H1 (cell line): ENCODE measurements at regions of chr17 and their contacts with region 1.

Region 1: DNA sequence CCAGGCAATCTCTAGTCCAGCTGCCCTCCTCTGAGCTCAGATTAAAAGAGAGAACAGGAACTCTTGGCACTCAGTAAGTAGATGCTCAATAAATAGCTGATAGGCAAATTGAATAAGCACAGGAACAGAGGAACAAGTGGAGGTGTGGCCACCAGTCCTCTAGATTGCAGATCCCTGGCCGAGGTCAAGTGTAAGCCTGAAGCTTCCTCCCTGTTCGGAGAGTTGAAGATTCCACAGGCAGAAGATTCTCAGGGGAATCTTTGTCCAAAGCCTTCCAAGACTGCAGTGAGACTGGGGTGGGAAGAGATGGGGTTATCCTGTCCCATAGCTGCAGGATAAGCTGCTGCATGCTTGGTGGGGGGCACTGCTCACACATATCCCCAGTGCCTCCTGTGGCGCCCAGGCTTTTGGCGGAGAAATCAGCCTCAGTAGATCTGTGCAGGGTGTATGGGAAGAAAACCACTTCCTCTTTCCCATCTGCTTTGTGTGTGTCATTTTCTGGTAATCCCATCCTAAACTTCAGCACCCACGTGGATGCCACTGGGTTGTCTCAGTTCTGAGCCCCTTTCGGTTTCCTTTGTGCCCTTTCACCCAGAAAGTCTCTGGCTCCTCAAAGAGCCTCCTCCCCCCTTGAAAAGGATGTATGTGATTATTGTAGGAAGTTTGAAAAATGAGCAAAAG is 12.1 kb downstream of the CD300A start:
- DNase-seq: no peak
- H3K4me3 ChIP-seq: no peak overlapping the region
- H3K27ac ChIP-seq: no peak overlapping the region
- H3K4me1 ChIP-seq: no peaks in the 10 kb centered on the region
- H3K27me3 ChIP-seq: no peaks in the 10 kb centered on the region; a peak in 1 of 7 replicates
- CTCF ChIP-seq: no peak
- EP300 ChIP-seq: no peak
- POLR2A ChIP-seq: no peak
- RAD21 ChIP-seq: no peak

Region 2: DNA sequence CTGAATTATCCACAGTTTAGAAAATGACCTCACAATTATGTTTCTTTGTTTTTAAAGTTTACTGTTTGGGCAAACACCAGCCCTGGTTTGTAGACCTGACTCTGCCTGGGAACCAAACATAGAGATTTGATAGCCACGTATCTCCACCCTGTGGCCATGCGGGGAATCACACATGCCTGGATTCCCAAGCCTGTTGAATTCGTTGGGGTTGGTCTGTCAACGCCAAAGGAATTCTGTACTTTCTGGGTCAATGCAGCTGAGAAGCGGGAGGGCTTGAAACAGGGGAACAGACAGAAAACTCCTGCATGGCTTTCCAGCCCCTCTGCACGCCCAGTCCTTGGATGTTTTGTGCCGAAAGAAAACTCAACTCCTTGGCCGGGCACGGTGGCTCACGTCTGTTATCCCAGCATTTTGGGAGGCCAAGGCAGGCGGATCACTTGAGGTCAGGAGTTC is 14.8 kb after region 1 on chr17:
- CTCF ChIA-PET with region 1: interaction called, 10 read pairs
- POLR2A ChIA-PET with region 1: no interaction called
- DNase-seq: peak; percentile 41 to 89
- H3K4me3 ChIP-seq: no peak overlapping the region
- H3K27ac ChIP-seq: no peak overlapping the region
- H3K4me1 ChIP-seq: no peaks in the 10 kb centered on the region
- H3K27me3 ChIP-seq: no peaks in the 10 kb centered on the region
- CTCF ChIP-seq: peak; percentile 91 to 98 (median 92)
- EP300 ChIP-seq: no peak
- POLR2A ChIP-seq: no peak
- RAD21 ChIP-seq: peak; percentile 94 to 97